Right lobe of liver (tissue), 6 donors: ENCODE measurements at regions of chr22 and their contacts with region 1.

Region 1: GRCh38 chr22:41946629-41947423 is at the start of gene CENPM:
- DNase-seq: peak; percentile 89 to 92 (median 90)
- ATAC-seq: peak; percentile 97 to 98 (median 97)
- H3K4me3 ChIP-seq: peak within 1 kb of the TSS; percentile 55 to 79 (median 76)
- H3K27ac ChIP-seq: no peak within 1 kb of the TSS
- H3K4me1 ChIP-seq: peaks cover 0 to 9% (median 0%) of the 10 kb centered on the region in 4 donors
- H3K27me3 ChIP-seq: no peaks in the 10 kb centered on the region
- CTCF ChIP-seq: no peak
- POLR2A ChIP-seq: no peak
- total RNA-seq, gene CENPM: 0.29 to 3.7 (median 1.8) TPM in 4 of 6 experiments, not detected in the others

Region 2: DNA sequence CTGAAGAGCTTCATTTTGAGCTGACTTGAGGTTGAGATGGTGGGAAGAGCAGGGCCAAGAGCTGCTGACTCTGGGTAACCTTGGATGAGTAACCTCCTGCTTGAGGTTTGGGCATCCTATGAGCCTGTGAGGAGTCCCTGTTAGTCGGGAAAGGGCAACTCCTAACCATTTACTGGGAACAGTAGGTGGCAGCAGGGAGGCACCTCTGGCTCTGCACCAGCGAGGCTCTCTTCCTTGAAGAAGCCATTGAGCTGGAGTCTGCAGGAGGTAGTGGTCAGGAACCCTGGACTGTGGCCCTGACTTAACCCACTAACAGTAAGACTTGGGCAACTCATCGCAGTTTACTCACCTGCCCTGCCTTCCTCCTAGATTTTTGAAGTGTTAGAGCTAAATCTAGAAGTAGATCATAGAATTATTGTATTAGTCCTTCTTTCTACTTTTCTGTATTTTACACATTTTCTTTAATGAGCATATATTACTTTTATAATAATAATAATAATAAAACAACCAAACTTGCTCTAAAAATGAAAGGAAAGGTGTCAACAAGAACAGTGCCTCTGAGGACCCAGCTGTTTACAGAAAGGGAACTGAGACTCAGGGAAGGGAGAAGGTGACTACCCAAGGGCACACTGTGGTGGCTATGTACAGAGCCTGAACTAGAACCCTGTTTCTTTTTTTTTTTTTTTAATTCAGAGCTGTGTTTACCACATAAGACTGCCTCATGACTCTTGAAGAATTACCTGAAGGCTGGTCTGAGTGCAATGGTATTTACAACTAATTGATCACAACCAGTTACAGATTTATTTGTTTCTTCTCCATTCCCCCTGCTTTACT is 200.0 kb before region 1 on chr22:
- intact Hi-C with region 1: loop called in 1 of 2 experiments (anchors 10 kb)
- DNase-seq: peak; percentile 59 to 72 (median 68)
- ATAC-seq: peak; percentile 97 to 98 (median 98)
- H3K4me3 ChIP-seq: no peak overlapping the region
- H3K27ac ChIP-seq: no peak overlapping the region
- H3K4me1 ChIP-seq: no peaks in the 10 kb centered on the region
- H3K27me3 ChIP-seq: no peaks in the 10 kb centered on the region
- CTCF ChIP-seq: peak; percentile 58 to 78 (median 77)
- POLR2A ChIP-seq: no peak

Region 3: GRCh38 chr22:41841085-41841659 is 105.7 kb before region 1 on chr22:
- intact Hi-C with region 1: no loop called
- DNase-seq: no peak
- ATAC-seq: peak; percentile 35 to 47 (median 45)
- H3K4me3 ChIP-seq: no peak overlapping the region
- H3K27ac ChIP-seq: no peak overlapping the region
- H3K4me1 ChIP-seq: peaks cover 0 to 60% (median 26%) of the 10 kb centered on the region in 4 donors
- H3K27me3 ChIP-seq: no peaks in the 10 kb centered on the region
- CTCF ChIP-seq: no peak
- POLR2A ChIP-seq: no peak